ENCODE measurements at regions of chr2 and their contacts with region 1.

Region 1: DNA sequence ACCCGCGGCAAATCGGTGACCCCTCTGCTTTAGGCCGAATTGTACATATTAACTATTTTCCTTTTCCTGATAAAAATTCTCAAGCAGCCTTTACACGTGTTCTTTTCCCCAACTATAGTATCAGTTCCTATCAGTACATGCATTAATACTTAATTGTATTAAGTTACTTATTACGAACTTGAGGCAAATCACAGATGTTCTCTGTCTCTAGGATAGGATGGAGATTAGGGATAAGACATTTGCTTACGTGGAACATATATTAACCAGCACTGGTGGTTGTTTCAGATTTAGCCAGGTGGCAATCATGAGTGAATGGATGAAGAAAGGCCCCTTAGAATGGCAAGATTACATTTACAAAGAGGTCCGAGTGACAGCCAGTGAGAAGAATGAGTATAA is 675 bp downstream of the GEMIN6 start:
- DNase-seq: no peak
- H3K4me3 ChIP-seq: peak overlapping the region; percentile 57 to 66 (median 60)
- H3K27ac ChIP-seq: peak overlapping the region; percentile 73 to 80 (median 78)
- H3K4me1 ChIP-seq: peaks cover 0 to 11% (median 8%) of the 10 kb centered on the region in 4 donors
- H3K27me3 ChIP-seq: no peaks in the 10 kb centered on the region
- CTCF ChIP-seq: no peak
- EP300 ChIP-seq: no peak
- POLR2A ChIP-seq: no peak

Region 2: GRCh38 chr2:38750891-38751595 is 27.6 kb before region 1 on chr2 and contains the start of gene SRSF7:
- intact Hi-C with region 1: loop called (anchors 2 kb)
- DNase-seq: peak; percentile 99
- H3K4me3 ChIP-seq: peak within 1 kb of the TSS; percentile 69 to 97 (median 84)
- H3K27ac ChIP-seq: peak within 1 kb of the TSS; percentile 92 to 99 (median 97)
- H3K4me1 ChIP-seq: peaks cover 0 to 45% (median 41%) of the 10 kb centered on the region in 4 donors
- H3K27me3 ChIP-seq: no peaks in the 10 kb centered on the region
- CTCF ChIP-seq: no peak
- EP300 ChIP-seq: peak in 1 of 4 donors; percentile 26
- POLR2A ChIP-seq: peak; percentile 100
- total RNA-seq, gene SRSF7: 73.1 to 140 (median 97.0) TPM